ENCODE measurements at regions of chr4 and their contacts with region 1.

Region 1: GRCh38 chr4:762211-763190 is 56.9 kb downstream of the PCGF3 start:
- DNase-seq: peak; percentile 55
- ATAC-seq: peak; percentile 43

Region 2: GRCh38 chr4:532588-533317 is 229.7 kb before region 1 on chr4:
- intact Hi-C with region 1: no loop called
- DNase-seq: no peak
- ATAC-seq: no peak

Region 3: DNA sequence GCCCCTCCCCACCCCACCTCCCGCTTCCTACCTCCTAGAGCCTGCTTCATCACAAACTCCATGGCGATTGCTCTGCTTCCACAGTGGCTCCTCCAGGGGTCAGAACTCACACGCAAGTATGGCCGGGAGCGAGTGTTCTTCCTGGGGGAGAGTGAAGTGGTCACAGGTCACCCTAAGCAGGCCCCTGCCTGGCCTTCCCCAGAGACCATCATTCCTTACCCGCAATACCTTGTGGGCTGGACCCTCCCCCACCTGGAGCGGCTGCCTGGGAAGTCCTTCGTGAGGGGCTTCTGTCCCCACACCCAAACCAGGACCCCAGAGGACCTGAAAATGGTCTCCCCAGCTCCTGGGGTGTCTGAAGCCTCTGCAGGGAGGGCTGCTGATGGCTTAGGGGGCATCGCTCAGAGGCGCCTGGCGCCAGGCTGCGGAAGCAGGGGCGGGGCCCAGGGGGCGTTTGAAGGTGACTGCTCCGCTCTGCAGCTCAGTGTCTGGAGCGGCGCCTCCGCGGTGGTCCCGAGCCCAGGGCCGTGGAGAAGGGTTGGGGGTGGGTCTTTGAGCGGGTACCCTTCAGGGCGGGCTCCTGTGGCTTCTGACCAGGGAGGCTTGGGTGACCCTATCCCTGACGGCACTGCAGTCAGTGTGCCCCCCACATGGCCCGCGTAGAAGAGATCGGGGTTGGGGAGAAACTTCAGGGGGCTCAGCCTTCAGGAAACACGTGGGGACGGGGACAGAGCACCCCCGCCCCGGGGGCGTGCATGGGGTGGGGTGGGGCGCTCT is 62.1 kb after region 1 on chr4:
- intact Hi-C with region 1: loop called (anchors 5 kb)
- DNase-seq: no peak
- ATAC-seq: no peak

Region 4: DNA sequence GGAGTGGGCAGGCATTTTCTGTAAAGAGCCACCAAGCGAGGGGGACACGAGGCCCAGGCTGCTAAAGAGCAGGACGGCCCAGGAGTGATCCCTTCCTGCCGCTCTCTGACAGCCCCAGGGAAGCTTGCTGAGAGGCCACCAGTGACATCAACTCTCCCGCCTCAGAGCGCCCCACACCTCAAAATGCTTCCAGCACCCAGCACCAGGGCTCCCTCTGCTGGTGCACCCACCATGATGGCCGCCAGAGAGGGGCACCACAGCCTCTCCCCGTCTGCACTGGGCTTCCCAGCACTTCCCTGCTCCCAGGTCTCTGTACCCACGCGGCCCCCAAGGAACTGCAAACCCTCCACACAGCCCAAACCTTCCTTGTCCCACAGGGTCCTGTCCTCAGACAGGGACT is 129.2 kb after region 1 on chr4:
- intact Hi-C with region 1: no loop called
- DNase-seq: no peak
- ATAC-seq: no peak